Heart left ventricle (tissue), 16 donors: ENCODE measurements at regions of chr10 and their contacts with region 1.

Region 1: DNA sequence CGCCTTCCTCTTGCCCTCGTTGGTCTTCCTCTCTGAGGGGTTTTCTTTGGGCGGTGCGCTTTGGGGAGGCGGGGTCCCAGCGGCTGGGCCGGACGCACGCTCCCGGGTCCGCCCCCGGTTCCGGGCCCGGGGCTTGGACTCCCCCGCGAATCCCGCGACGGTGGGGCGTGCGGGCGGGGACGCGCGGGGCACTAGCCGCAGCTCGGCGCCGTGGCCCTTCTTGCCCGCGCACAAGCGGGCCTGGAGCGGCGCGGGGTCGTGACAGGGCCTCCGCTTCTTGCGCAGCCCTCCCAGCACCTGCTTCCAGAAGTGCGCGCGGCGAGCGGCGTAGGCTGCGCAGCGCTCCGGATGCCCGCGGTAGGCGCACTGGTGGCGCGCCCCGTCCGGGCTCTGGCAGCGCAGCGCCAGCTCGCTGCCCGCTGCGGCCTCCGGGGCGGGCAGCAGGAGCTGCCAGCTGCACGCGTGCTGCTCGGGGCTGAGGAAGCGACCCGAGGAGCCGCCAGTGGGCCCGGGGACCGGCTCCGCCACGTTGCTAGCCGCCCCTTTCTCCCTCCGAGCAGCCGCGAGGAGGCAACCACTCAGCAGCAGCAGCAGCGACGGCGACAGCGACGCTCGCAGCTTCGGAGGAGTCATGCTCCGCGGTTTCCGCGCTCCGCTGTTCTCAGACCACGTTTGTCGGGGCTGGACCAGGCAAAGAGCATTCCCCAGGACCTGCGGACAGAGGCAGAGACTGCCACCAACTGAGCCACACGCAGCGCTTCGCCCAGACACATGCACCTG is 759 bp downstream of the FGFBP3 start:
- DNase-seq: peak; percentile 70 to 87 (median 82)
- ATAC-seq: peak; percentile 91 to 97 (median 97)
- H3K4me3 ChIP-seq: peak overlapping the region; percentile 55 to 94 (median 80)
- H3K27ac ChIP-seq: peak overlapping the region in 11 of 12 donors; percentile 64 to 83 (median 79)
- H3K4me1 ChIP-seq: peaks cover 0 to 23% (median 8%) of the 10 kb centered on the region in 12 donors
- H3K27me3 ChIP-seq: peaks cover 0 to 4% (median 0%) of the 10 kb centered on the region in 9 donors
- CTCF ChIP-seq: peak; percentile 14 to 74 (median 40)
- POLR2A ChIP-seq: no peak

Region 2: DNA sequence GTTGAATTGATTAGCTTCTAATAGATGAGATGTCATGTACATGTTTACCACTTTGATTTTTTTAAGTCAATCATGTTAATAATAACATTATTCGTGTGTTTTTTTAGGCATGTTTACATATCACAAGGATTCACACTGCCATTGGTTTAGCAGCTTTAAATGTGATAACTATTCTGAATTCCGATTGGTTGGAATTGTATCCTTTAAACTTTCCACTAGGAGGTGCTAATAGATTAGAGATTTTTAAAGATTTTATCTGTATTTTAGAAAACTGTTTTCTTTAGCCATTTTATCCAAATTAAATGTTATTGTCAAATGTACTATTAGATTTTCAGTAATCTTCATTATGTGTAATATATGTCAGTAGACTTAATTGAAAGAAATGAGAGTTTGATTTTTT is 415.2 kb before region 1 on chr10:
- intact Hi-C with region 1: loop called in 2 of 10 experiments (anchors 10 kb)
- DNase-seq: no peak
- ATAC-seq: no peak
- H3K4me3 ChIP-seq: no peak overlapping the region
- H3K27ac ChIP-seq: no peak overlapping the region
- H3K4me1 ChIP-seq: peaks cover 0 to 3% (median 0%) of the 10 kb centered on the region in 12 donors
- H3K27me3 ChIP-seq: no peaks in the 10 kb centered on the region
- CTCF ChIP-seq: peak; percentile 26 to 71 (median 58)
- POLR2A ChIP-seq: no peak

Region 3: DNA sequence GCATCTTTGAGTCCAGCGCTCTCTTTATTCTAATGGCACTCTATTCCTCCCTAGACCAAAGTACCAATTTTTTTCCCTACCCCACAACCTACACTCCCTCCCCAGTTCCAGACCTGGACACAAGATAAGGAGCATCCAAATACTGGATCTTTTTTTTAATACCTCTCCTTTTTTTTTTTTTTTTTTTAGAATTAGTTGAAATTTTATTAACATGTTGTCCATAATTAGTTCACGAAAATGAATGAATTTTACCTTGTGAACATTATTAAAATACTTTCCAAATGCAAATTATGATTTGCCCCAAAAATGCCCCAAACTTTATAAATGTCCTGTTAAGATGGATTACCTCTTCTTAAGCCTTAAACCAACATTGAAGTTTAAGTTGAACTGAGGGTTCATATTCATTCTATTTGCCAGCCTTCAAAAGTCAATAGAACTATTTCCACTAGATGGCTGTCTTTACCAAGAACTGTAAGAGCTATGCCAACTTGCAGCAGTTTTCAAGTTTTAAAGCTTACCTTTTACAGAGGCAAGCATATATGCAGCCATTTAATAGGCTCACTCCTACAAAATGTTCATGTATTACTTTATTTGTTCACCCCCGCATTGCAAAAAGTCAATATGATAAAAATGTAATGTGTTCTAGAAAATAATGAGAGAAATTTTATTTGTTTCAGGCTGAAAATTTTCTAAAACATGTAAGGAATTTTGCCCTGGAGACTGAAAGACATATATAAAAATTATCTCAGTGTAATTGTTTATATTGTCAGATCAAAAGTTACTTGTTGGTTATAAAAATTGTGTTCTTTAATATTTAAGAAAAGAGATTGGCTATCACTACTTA is 150.0 kb before region 1 on chr10:
- intact Hi-C with region 1: loop called (anchors 2 to 5 kb)
- DNase-seq: no peak
- ATAC-seq: peak in 1 of 4 donors; percentile 43
- H3K4me3 ChIP-seq: no peak overlapping the region
- H3K27ac ChIP-seq: no peak overlapping the region
- H3K4me1 ChIP-seq: no peaks in the 10 kb centered on the region
- H3K27me3 ChIP-seq: no peaks in the 10 kb centered on the region
- CTCF ChIP-seq: peak; percentile 31 to 66 (median 49)
- POLR2A ChIP-seq: no peak

Region 4: GRCh38 chr10:91797874-91798648 is 110.5 kb before region 1 on chr10 and contains the start of gene TNKS2:
- intact Hi-C with region 1: loop called in 1 of 10 experiments (anchors 10 kb)
- DNase-seq: peak; percentile 95 to 98 (median 95)
- ATAC-seq: peak; percentile 93 to 98 (median 97)
- H3K4me3 ChIP-seq: peak within 1 kb of the TSS; percentile 76 to 99 (median 92)
- H3K27ac ChIP-seq: peak within 1 kb of the TSS; percentile 82 to 98 (median 97)
- H3K4me1 ChIP-seq: peaks cover 0 to 52% (median 30%) of the 10 kb centered on the region in 12 donors
- H3K27me3 ChIP-seq: no peaks in the 10 kb centered on the region
- CTCF ChIP-seq: peak in 1 of 12 donors; percentile 17
- POLR2A ChIP-seq: peak; percentile 26 to 92
- total RNA-seq, gene TNKS2: 10.3 to 24.7 (median 15.4) TPM

Region 5: GRCh38 chr10:91923371-91924211 is 15.1 kb after region 1 on chr10 and contains the start of gene BTAF1:
- intact Hi-C with region 1: loop called in 1 of 10 experiments (anchors 1 kb)
- DNase-seq: peak; percentile 91 to 97 (median 95)
- ATAC-seq: peak; percentile 99 to 100 (median 100)
- H3K4me3 ChIP-seq: peak within 1 kb of the TSS; percentile 56 to 95 (median 88)
- H3K27ac ChIP-seq: peak within 1 kb of the TSS; percentile 76 to 99 (median 95)
- H3K4me1 ChIP-seq: peaks cover 0 to 36% (median 26%) of the 10 kb centered on the region in 12 donors
- H3K27me3 ChIP-seq: peaks cover 0 to under 1% (median 0%) of the 10 kb centered on the region in 9 donors
- CTCF ChIP-seq: peak in 1 of 12 donors; percentile 16
- POLR2A ChIP-seq: peak; percentile 31 to 90
- total RNA-seq, gene BTAF1: 10.9 to 22.3 (median 12.0) TPM

Region 6: DNA sequence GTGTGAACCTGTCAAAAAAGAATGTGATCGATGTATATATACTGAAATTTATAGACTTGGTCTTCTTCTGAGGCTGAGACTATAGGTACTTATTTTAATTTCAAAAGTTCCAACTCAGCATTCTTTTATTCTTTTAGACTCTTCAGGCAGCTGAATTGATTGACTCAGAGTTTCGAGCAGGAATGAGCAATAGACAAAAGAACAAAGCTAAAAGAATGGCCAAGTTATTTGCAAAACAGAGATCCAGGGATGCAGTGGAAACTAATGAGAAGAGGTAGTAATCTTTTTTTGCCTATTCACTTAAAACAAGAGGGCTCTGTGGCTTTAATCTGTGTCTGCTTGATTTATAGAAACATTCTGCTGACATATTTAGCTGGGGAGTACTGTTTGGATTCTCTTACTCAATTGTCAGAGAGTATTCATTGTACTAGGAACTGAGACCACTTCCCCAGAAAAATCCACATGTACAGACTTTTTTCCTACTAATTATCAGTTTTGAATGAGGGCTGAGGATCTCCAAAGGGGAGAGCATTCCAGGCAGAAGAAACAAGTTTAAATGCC is 45.2 kb after region 1 on chr10:
- intact Hi-C with region 1: no loop called
- DNase-seq: no peak
- ATAC-seq: no peak
- H3K4me3 ChIP-seq: no peak overlapping the region
- H3K27ac ChIP-seq: no peak overlapping the region
- H3K4me1 ChIP-seq: no peaks in the 10 kb centered on the region
- H3K27me3 ChIP-seq: no peaks in the 10 kb centered on the region
- CTCF ChIP-seq: no peak
- POLR2A ChIP-seq: no peak